ENCODE measurements at regions of chr9 and their contacts with region 1.

Region 1: GRCh38 chr9:5510360-5510931 is at the start of gene PDCD1LG2:
- DNase-seq: no peak
- H3K4me3 ChIP-seq: no peak within 1 kb of the TSS
- H3K27ac ChIP-seq: peak within 1 kb of the TSS; percentile 58
- H3K4me1 ChIP-seq: peaks cover 8% of the 10 kb centered on the region
- H3K27me3 ChIP-seq: no peaks in the 10 kb centered on the region
- CTCF ChIP-seq: no peak
- total RNA-seq, gene PDCD1LG2: 0.37 and 0.47 TPM in 2 replicates

Region 2: DNA sequence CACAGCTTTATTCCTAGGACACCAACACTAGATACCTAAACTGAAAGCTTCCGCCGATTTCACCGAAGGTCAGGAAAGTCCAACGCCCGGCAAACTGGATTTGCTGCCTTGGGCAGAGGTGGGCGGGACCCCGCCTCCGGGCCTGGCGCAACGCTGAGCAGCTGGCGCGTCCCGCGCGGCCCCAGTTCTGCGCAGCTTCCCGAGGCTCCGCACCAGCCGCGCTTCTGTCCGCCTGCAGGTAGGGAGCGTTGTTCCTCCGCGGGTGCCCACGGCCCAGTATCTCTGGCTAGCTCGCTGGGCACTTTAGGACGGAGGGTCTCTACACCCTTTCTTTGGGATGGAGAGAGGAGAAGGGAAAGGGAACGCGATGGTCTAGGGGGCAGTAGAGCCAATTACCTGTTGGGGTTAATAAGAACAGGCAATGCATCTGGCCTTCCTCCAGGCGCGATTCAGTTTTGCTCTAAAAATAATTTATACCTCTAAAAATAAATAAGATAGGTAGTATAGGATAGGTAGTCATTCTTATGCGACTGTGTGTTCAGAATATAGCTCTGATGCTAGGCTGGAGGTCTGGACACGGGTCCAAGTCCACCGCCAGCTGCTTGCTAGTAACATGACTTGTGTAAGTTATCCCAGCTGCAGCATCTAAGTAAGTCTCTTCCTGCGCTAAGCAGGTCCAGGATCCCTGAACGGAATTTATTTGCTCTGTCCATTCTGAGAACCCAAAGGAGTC is 59.9 kb before region 1 on chr9 and contains the start of gene CD274:
- CTCF ChIA-PET with region 1: interaction called, 11 read pairs
- POLR2A ChIA-PET with region 1: no interaction called
- intact Hi-C with region 1: no loop called
- DNase-seq: peak; percentile 81
- H3K4me3 ChIP-seq: peak within 1 kb of the TSS; percentile 60
- H3K27ac ChIP-seq: peak within 1 kb of the TSS; percentile 49
- H3K4me1 ChIP-seq: no peaks in the 10 kb centered on the region
- H3K27me3 ChIP-seq: no peaks in the 10 kb centered on the region
- CTCF ChIP-seq: peak; percentile 79
- total RNA-seq, gene CD274: 0.33 and 0.62 TPM in 2 replicates

Region 3: DNA sequence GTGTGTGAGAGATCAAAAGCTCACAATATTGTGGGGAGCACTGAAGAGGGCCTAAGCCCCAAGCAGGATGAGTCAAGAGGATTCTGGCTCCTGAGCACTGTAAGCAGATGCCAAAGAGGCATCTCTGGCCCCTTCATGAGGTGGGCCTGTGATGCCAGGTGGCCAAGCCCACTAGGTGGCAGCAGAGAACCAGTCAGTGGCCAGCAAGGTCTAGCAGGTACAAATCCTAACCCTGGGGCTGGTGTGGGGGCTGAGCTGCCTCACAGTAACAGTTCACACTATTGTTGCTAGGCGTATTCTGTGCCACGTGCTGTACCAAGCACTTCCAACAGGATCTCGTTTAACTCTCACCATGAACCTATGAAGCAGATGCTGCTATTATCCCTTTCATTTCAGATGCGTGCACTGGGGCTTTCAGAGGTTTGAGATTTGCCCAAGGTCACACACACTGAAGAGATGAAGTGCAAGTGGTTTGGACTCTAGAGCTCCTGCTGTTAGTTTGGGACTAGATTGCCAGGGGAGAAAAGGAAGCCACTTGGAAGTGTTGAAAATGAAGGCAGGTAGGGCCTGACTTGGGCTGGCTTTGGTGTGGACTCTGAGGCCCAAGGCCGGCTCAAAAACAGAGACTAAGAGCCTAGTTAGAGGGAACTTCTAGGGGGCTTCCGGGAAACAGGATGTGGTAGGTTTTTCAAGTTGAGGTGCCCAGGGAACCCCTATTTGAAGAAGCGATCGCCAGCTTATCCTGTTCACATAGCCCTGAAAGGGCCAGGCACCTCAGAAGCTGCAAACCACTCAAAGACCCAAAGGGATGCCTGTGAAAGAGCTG is 375.9 kb after region 1 on chr9:
- CTCF ChIA-PET with region 1: no interaction called
- POLR2A ChIA-PET with region 1: no interaction called
- intact Hi-C with region 1: no loop called
- DNase-seq: peak; percentile 80
- H3K4me3 ChIP-seq: no peak overlapping the region
- H3K27ac ChIP-seq: no peak overlapping the region
- H3K4me1 ChIP-seq: no peaks in the 10 kb centered on the region
- H3K27me3 ChIP-seq: peaks cover 21% of the 10 kb centered on the region
- CTCF ChIP-seq: peak; percentile 96

Measured in A673 (cell line).